Cardiac septum (tissue), 1 donor: ENCODE measurements at regions of chr10 and their contacts with region 1.

Region 1: GRCh38 chr10:18059826-18060559 is 80.2 kb upstream of the CACNB2 start:
- DNase-seq: no peak

Region 2: DNA sequence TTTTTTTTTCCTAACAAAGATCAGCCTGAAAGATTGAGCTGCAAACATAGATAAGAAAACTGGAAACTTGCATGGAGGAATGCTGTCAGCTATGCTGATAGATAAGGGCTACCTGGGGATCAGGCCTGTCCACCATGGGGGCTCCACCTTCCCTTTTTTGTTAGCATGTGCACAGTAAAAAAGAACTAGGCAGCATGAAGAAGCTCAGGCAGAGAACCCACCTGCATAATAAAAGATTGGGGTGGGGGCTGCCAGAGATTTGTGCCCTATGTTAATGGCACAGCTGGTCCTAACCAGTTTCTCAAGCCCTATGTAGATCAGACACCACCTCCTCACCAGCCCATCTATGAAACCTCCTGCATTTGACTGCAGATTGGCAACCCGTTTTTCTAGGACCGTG is 34.8 kb after region 1 on chr10:
- intact Hi-C with region 1: loop called (anchors 5 kb)
- DNase-seq: no peak